ENCODE measurements at regions of chr19 and their contacts with region 1.

Region 1: GRCh38 chr19:43463381-43464136 is 1.8 kb downstream of the LYPD3 start:
- DNase-seq: peak; percentile 98
- H3K4me3 ChIP-seq: peak overlapping the region; percentile 65 to 88
- H3K27ac ChIP-seq: peak overlapping the region; percentile 61 to 67; a peak in 3 of 4 replicates
- H3K4me1 ChIP-seq: peaks cover 0 to 10% of the 10 kb centered on the region in 2 experiments; a peak in 1 of 4 replicates
- H3K27me3 ChIP-seq: no peaks in the 10 kb centered on the region
- CTCF ChIP-seq: no peak
- EP300 ChIP-seq: no peak
- RAD21 ChIP-seq: no peak

Region 2: GRCh38 chr19:43474986-43475705 is 11.6 kb after region 1 on chr19:
- CTCF ChIA-PET with region 1: interaction called, 16 read pairs
- POLR2A ChIA-PET with region 1: interaction called, 5 read pairs
- DNase-seq: peak; percentile 99
- H3K4me3 ChIP-seq: peak overlapping the region; percentile 18 to 35; a peak in 3 of 4 replicates
- H3K27ac ChIP-seq: peak overlapping the region; percentile 29 to 48; a peak in 2 of 4 replicates
- H3K4me1 ChIP-seq: peaks cover 3 to 5% of the 10 kb centered on the region in 2 experiments; a peak in 2 of 4 replicates
- H3K27me3 ChIP-seq: no peaks in the 10 kb centered on the region
- CTCF ChIP-seq: no peak
- EP300 ChIP-seq: no peak
- RAD21 ChIP-seq: no peak

Region 3: DNA sequence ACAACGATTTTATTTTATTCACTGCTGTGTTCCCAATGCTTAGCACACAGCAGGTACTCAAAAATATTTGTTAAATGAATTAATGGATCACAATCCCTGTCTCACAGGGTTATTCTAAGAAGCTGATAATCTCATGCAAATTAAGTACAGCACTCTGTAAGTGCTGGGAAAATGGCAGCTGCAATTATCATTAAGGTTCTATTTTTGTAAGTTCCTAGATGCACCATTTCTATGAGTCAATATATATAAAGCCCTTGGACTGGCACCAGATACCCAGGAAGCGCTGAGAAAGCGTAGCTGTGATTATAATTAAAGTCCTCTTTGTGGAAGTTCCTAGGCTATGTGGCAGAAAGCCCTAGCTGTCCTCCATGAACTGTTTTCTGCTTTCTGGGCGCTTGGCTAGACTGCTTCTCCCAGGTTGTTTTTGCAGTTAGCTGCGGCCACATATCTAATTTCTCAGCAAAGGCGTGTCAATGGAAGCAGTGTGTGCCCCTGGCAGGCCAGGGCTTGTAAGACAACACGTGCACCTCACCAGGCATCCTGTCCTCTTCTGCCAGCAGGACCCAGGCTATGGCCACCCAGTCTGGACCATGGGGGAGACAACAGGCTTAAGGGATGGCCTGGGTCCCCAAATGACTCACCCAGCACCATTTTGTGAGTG is 143.1 kb after region 1 on chr19:
- CTCF ChIA-PET with region 1: no interaction called
- POLR2A ChIA-PET with region 1: no interaction called
- DNase-seq: no peak
- H3K4me3 ChIP-seq: no peak overlapping the region
- H3K27ac ChIP-seq: no peak overlapping the region
- H3K4me1 ChIP-seq: no peaks in the 10 kb centered on the region
- H3K27me3 ChIP-seq: no peaks in the 10 kb centered on the region
- CTCF ChIP-seq: no peak
- EP300 ChIP-seq: no peak
- RAD21 ChIP-seq: no peak

Measured in SK-N-SH (cell line).